RWPE1 (cell line): ENCODE measurements at regions of chr1 and their contacts with region 1.

Region 1: DNA sequence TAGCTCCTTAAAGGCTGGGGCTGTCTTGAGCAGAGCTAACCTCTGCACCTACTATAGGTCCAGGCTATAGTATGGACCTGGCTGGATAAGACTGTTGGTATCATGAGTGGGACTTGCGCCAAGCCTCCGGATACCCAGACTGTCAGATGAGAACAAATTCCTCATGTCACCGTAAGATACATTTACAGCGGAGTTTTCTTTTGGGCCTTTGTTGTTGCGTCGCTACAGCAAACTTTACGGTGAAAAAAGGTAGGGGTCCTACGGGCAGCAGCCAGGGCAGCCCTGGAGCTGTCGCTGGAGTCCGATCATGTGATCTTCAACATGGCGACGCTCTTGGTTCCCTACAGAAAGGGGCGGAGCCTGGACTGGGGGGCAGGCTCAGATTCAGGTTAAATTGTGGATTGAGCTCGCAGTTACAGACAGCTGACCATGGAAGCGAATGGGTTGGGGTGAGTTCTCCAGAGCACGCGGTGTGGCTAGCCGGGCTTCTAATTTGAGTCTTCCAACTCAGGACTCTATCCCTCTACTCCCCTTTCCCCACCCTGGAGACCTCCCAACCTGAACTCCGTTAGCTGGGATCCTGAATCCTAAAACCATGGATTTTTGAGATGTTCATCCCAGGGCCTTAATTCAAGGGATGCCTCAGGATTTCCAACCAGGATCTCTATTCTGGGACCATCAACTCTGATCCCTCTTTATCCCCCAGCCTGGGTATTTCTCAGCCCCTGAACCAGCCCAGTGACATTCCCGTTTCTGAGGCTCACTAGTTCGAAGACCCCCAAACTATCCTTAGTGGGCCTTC is at the start of gene UROD:
- DNase-seq: peak; percentile 97
- H3K27ac ChIP-seq: peak within 1 kb of the TSS; percentile 91
- CTCF ChIP-seq: no peak

Region 2: GRCh38 chr1:45059829-45060228 is 47.8 kb after region 1 on chr1:
- CTCF ChIA-PET with region 1: no interaction called
- POLR2A ChIA-PET with region 1: no interaction called
- DNase-seq: no peak
- H3K27ac ChIP-seq: no peak overlapping the region
- CTCF ChIP-seq: no peak

Region 3: GRCh38 chr1:45297604-45298356 is 285.7 kb after region 1 on chr1:
- CTCF ChIA-PET with region 1: interaction called, 29 read pairs
- POLR2A ChIA-PET with region 1: interaction called, 4 read pairs
- DNase-seq: no peak
- H3K27ac ChIP-seq: no peak overlapping the region
- CTCF ChIP-seq: no peak

Region 4: DNA sequence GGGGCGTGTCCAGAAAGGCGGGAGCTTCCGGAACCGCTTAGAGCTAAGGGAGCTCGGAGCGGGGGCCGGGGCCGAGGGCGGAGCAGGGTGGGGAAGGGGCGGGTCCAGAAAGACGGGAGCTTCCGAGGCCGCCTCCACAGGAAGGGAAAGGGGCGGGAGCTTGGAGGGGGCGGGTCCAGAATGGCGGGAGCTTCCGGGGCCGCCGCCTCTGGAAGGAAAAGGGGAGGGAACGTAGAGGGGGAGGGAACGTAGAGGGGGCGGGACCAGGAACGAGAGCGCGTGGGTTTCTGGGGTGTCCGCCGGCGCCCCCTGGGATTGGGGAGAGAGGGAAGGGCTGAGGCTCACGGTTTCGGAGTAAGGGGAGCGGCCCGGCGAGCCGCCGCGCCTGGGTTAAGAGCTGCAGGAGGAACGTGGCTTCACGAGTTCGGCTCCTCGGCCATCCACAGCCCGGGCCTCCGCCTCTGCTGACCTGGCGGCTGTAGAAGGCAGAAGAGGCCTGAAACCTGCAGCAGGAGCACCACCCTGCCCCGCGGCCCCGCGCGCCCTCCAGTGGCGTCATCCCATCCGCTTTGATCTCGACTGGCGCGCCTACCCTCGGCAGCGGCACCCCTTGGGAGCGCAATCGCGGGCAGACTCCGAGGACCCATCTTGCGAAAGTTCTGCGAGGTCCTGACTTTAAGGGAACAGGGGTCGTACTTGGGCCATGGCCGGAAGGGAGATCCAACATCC is 291.7 kb after region 1 on chr1:
- CTCF ChIA-PET with region 1: interaction called, 29 read pairs
- POLR2A ChIA-PET with region 1: interaction called, 6 read pairs
- DNase-seq: peak; percentile 98
- H3K27ac ChIP-seq: peak overlapping the region; percentile 86
- CTCF ChIP-seq: peak; percentile 78

Region 5: DNA sequence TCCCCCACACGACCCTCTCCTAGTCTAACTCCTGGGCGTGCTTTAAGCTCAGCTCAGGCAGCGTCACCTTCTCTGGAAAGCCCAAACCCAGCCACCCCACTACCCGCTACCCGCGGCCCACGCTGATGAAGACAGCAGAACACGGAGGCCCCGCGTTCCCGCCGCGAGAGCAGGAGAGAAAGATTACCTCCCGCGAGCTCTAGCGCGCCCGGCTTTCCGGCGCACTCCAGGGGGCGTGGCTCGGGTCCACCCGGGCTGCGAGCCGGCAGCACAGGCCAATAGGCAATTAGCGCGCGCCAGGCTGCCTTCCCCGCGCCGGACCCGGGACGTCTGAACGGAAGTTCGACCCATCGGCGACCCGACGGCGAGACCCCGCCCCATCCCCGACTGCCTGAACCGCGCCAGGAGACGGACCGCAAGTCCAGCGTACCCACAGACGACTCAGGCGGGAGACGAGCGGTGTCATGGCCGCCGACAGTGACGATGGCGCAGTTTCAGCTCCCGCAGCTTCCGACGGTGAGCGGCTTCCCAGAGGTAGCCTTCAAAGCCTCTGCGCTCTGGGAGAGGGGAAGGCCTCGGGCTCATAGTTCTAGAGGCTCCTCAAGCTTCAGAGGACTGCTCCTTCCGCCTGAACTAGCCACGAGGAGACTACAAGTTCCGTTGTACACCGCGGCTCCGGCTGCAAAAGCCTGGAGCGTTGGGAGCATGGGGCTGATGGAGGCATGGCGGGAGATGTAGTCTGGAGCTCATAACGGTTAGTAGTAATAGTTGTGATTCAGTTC is 327.9 kb after region 1 on chr1 and contains the starts of genes MUTYH and TOE1:
- CTCF ChIA-PET with region 1: interaction called, 4 read pairs
- POLR2A ChIA-PET with region 1: interaction called, 10 read pairs
- DNase-seq: peak; percentile 92
- H3K27ac ChIP-seq: peak within 1 kb of the TSS; percentile 96
- CTCF ChIP-seq: no peak

Region 6: DNA sequence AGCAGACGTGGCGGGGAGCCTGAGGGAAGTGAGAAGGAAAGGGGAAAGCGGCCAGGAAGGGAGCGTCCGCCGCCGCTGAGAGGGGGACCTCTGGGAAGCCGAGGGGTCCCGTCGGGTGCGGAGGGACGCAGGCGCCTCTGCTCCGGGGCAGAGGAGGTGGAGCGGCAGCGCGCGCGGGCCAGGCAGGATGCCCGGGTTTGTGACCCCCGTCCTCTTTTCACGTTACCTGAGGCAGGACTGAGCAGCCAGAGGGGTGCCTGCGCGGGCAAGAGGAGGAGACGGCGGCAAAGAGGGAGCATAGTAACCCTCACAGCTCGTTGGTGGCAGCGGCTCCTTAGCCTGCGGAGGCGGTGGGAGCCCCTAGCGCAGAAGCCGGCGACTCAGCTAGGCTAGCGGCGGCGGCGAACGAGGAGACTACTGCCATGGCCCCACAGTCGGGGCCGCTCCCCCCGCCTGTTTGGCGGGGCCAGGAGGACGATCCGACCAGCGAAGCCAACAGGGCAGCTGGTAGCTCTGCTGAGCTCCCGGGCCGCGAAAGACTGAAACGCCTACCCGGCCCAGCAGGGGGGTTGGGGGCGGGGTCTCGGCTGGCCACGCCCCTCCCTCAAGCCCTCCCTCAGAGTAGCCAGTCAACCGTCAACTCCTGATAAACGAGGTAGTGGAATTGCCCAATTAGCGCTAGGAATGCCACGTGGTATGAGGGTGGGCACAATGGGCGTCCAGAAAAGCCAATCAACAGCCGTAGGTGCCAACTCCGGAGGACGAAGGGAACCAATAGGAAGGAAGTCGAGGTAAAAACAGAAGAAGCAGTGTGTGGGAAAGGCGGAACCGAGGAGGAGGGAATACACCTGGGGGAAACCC is 478.8 kb after region 1 on chr1 and contains the start of gene TESK2:
- CTCF ChIA-PET with region 1: interaction called, 15 read pairs
- POLR2A ChIA-PET with region 1: interaction called, 3 read pairs
- DNase-seq: peak; percentile 99
- H3K27ac ChIP-seq: peak within 1 kb of the TSS; percentile 82
- CTCF ChIP-seq: no peak